PC-3 (cell line): ENCODE measurements at regions of chr3 and their contacts with region 1.

Region 1: DNA sequence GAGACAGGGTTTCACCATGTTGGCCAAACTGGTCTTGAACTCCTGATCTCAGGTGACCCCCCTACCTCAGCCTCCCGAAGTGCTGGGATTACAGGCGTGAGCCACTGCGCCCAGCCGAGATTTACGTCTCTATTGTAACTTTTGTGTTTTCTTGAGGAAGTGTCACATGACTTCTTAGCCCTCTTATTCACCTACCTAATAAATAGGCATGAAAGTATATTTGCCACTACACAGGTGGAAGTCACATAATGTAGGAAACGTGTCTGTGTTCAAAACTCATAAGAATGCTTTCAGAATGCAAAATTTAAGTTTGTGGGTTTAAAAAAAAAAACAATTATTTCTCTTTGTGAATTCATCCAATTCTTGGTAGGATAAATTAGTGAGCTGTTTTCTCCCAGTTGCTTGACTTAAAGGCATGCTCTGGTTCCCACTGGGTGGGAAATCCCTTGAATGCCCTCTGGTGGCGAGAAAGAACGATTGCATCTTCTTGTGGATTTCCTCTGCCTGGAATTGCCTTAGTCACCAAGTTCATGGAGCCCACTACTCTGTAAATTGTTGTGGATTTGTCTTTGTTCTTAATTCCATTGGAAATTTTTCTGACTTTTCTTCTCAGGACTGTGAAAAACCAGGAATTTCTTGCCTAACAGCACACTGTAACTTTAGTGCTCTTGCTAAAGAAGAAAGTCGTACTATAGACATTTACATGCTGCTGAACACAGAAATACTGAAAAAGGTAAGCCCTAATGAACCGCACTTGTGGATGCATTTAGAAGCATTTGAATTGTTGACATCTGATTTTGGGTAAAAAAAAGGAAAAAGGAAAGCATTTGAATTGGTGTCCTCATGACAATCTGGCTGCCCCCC is 82.2 kb upstream of the CTDSPL start:
- DNase-seq: peak; percentile 84
- ATAC-seq: peak; percentile 93
- H3K4me3 ChIP-seq: no peak overlapping the region
- H3K27ac ChIP-seq: no peak overlapping the region
- H3K4me1 ChIP-seq: no peaks in the 10 kb centered on the region
- H3K27me3 ChIP-seq: peaks cover 38% of the 10 kb centered on the region
- CTCF ChIP-seq: peak; percentile 87

Region 2: DNA sequence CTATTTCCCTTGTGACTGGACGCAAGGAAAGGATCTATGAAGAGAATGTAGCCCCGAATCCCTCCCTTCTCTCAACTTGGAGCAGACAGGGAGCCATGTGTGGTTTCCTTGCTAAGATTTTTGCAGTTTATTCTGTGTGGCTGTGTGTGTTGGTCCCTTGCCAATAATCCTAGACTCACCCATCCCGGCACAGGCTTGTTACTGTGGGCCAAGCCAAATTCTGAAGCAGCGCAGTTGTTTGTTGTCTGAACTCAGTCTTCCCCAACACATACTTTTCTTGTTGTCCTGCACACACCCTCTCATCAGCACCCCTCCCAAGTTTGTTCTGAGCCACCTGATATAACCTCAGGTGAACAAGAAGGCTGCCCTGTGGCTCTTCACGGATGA is 111.1 kb before region 1 on chr3:
- CTCF ChIA-PET with region 1: no interaction called
- POLR2A ChIA-PET with region 1: no interaction called
- intact Hi-C with region 1: no loop called
- DNase-seq: no peak
- ATAC-seq: no peak
- H3K4me3 ChIP-seq: no peak overlapping the region
- H3K27ac ChIP-seq: no peak overlapping the region
- H3K4me1 ChIP-seq: no peaks in the 10 kb centered on the region
- H3K27me3 ChIP-seq: peaks cover 62% of the 10 kb centered on the region
- CTCF ChIP-seq: no peak

Region 3: DNA sequence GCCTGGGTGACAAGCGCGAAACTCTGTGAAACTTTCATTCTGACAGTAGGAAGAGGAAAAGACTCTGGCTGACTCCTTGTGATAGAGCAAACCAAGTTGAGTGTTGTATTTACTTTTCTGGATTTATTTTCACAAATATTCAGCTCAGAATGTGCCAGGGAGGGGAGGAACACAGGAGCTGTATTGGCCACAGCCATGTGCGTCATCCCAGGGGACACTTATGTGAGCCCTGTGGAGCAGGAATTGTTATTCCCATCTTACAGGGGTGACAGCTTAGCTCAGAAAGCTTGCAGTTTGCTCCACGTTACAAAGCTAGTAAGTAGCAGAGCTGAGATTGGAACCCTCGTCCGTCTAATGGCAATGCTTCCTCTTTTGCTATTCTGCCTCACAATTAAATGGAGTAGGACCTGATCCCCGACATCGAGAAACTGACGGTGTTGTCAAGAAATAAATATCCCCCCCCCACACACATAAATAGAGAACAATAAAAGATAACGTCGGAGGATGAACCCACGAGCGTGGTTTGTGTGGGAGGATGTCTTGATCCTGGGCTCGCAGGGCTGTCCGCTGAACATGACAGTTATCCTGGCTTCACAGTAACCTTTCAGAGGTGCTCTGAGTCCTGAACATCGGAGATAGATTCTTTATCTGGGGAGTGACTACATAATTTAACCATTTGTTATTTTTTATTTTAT is 69.4 kb before region 1 on chr3:
- CTCF ChIA-PET with region 1: interaction called, 3 read pairs
- POLR2A ChIA-PET with region 1: no interaction called
- intact Hi-C with region 1: loop called (anchors 5 kb)
- DNase-seq: no peak
- ATAC-seq: no peak
- H3K4me3 ChIP-seq: no peak overlapping the region
- H3K27ac ChIP-seq: no peak overlapping the region
- H3K4me1 ChIP-seq: peaks cover 4% of the 10 kb centered on the region; the same call in 1 of the 2 replicates
- H3K27me3 ChIP-seq: peaks cover 70% of the 10 kb centered on the region
- CTCF ChIP-seq: no peak